PC-3 (cell line): ENCODE measurements at regions of chr12 and their contacts with region 1.

Region 1: DNA sequence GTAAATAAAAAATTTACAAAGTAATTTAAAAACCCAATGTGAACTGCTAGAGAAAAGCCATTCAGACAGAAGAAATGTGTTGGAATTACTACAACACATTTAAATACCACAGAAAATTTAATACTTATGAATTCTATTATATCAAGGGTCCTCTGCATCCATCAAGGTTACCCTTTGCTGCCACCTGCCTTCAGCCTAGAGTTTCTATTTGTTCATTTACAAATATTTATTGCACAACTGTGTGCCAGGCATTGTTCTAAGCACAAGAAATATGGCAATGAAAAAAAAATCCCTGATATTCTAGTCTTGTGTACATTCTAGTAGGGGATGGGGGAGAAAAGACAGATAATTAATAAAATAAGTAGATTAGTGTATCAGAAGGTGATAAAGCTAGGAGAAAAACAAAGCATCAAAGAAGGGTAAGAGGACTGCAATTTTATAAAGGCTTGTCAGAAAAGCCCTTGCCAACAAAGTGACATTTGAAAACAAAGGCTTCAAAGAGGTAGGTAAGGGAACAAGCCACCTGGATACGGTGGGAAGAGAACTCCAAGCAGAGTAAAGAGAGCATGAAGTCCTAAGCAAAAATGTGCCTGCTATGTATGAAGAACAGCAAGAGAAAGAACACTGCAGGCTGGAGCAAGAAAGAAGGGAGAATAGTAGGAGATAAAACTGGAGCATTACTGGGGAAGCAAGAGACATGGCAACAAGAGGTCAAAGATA is 59.1 kb upstream of the SLC6A13 start:
- DNase-seq: peak; percentile 33
- ATAC-seq: no peak
- H3K4me3 ChIP-seq: no peak overlapping the region
- H3K27ac ChIP-seq: no peak overlapping the region
- H3K4me1 ChIP-seq: no peaks in the 10 kb centered on the region
- H3K27me3 ChIP-seq: no peaks in the 10 kb centered on the region
- CTCF ChIP-seq: peak; percentile 39; the same call in 1 of the 2 replicates

Region 2: GRCh38 chr12:203462-204260 is 118.1 kb before region 1 on chr12:
- CTCF ChIA-PET with region 1: no interaction called
- POLR2A ChIA-PET with region 1: interaction called, 11 read pairs
- intact Hi-C with region 1: no loop called
- DNase-seq: no peak
- ATAC-seq: no peak
- H3K4me3 ChIP-seq: no peak overlapping the region
- H3K27ac ChIP-seq: no peak overlapping the region
- H3K4me1 ChIP-seq: peaks cover 4% of the 10 kb centered on the region; the same call in 1 of the 2 replicates
- H3K27me3 ChIP-seq: peaks cover 25% of the 10 kb centered on the region
- CTCF ChIP-seq: no peak